H1 (cell line): ENCODE measurements at regions of chr7 and their contacts with region 1.

Region 1: DNA sequence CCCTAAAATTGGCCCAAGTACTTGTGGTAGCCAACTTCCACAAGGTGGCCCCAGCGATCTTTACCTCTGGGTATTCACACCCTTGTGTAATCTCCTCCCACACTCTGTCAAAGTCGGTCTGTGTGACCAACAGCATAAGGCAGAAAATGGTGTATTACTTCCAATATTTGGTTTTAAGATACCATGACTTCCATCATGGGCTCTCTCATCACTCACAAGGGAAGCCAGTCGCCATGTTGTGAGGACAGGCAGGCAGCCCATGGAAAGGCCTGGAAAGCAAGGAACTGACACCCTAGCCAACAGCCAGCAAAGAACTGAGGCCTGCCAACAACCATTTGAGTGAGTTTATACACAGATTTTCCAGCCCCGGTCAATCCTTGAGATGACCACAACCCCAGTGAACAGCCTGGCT is 91.0 kb upstream of the KMT2E start:
- DNase-seq: peak; percentile 41 to 63
- H3K4me3 ChIP-seq: no peak overlapping the region
- H3K27ac ChIP-seq: no peak overlapping the region
- H3K4me1 ChIP-seq: no peaks in the 10 kb centered on the region; a peak in 1 of 7 replicates
- H3K27me3 ChIP-seq: no peaks in the 10 kb centered on the region
- CTCF ChIP-seq: peak; percentile 57 to 87 (median 73)
- EP300 ChIP-seq: no peak
- POLR2A ChIP-seq: no peak
- RAD21 ChIP-seq: peak; percentile 96 to 97

Region 2: DNA sequence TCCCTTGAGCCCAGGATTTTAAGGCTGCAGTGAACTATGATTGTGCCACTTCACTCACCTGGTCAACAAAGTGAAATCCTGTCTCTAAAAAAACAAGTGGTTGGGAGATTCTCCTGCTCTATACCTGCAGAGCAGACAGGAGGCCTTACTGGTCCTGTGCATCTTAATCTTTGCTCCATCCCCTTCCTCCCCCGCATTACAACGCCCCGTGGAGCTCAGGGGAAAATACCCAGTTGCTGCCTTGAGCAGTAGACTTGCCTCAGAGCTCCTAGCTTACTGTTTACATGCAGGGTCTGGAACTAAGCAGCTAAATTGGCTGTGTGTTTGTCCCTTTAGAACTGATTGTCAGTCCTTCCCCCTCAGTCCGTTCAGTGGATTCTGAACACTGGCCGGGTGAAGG is 32.8 kb before region 1 on chr7:
- CTCF ChIA-PET with region 1: interaction called, 83 read pairs
- POLR2A ChIA-PET with region 1: no interaction called
- DNase-seq: no peak
- H3K4me3 ChIP-seq: no peak overlapping the region
- H3K27ac ChIP-seq: no peak overlapping the region
- H3K4me1 ChIP-seq: no peaks in the 10 kb centered on the region
- H3K27me3 ChIP-seq: no peaks in the 10 kb centered on the region
- CTCF ChIP-seq: no peak
- EP300 ChIP-seq: no peak
- POLR2A ChIP-seq: no peak
- RAD21 ChIP-seq: no peak

Region 3: GRCh38 chr7:104900525-104901239 is 22.3 kb before region 1 on chr7:
- CTCF ChIA-PET with region 1: interaction called, 19 read pairs
- POLR2A ChIA-PET with region 1: no interaction called
- DNase-seq: no peak
- H3K4me3 ChIP-seq: no peak overlapping the region
- H3K27ac ChIP-seq: no peak overlapping the region
- H3K4me1 ChIP-seq: no peaks in the 10 kb centered on the region
- H3K27me3 ChIP-seq: no peaks in the 10 kb centered on the region; a peak in 1 of 7 replicates
- CTCF ChIP-seq: no peak
- EP300 ChIP-seq: no peak
- POLR2A ChIP-seq: no peak
- RAD21 ChIP-seq: no peak

Region 4: DNA sequence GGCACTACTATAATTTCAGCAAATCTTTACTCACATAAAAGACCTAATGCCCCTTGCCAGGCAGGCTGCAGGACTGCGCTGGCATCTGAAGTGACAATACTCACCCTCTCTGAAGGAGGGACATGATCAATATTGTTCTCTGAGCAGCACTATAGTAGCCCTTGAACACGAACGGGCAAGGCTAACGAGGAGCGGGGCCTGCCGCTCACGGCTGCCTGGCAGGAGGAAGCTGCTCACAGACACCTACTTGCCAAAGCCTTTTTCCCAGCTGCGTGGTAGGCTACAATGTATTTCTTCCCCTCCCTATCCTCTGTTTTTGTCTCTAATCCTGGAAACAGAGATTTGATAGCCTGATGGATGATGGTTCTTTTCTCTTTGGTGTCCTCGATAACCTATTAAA is 579.2 kb after region 1 on chr7:
- CTCF ChIA-PET with region 1: no interaction called
- POLR2A ChIA-PET with region 1: no interaction called
- DNase-seq: no peak
- H3K4me3 ChIP-seq: no peak overlapping the region
- H3K27ac ChIP-seq: no peak overlapping the region
- H3K4me1 ChIP-seq: no peaks in the 10 kb centered on the region
- H3K27me3 ChIP-seq: no peaks in the 10 kb centered on the region
- CTCF ChIP-seq: no peak
- EP300 ChIP-seq: no peak
- POLR2A ChIP-seq: no peak
- RAD21 ChIP-seq: no peak